ENCODE measurements at regions of chr5 and their contacts with region 1.

Region 1: GRCh38 chr5:32298059-32298415 is 14.7 kb downstream of the MTMR12 start:
- DNase-seq: no peak
- CTCF ChIP-seq: no peak

Region 2: DNA sequence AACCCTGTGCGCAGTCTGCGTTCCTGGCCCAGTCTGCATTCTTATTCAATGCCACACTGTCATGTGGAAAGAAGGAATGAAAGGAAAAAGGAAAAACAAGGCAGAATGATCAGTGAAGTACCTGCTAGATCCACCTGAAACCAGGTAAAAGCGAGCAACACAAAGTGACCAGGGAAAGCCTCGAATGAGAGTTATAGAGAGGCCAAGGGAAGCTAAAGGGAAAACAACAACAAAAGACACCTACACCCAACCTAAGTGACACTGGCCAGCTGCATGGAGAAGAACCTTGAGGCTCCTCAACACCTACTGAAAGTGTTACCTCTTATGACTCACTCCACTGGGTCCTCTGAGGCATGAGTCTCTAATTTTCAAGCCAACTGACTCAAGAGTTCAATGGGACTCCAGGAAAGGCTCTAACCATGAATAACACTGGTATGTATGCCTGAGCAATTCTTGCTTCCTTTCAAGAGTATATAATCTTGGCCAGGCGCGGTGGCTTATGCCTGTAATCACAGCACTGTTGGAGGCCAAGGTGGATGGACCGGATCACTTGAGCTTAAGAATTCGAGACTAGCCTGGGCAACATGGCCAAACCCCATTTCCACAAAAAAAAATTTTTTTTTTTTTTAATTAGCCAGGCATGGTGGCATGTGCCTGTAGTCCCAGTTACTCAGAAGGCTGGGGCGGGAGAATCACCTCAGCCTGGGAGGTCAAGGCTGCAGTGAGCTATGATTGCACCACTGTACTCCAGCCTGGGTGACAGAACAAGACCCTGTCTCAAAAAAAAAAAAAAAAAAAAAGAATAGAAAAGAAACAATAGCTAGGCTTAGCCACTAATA is 14.3 kb before region 1 on chr5:
- CTCF ChIA-PET with region 1: interaction called, 50 read pairs
- POLR2A ChIA-PET with region 1: no interaction called
- DNase-seq: peak; percentile 45
- CTCF ChIP-seq: no peak

Measured in GM10248 (cell line).